Right cardiac atrium (tissue), 5 donors: ENCODE measurements at regions of chr1 and their contacts with region 1.

Region 1: GRCh38 chr1:167599957-167600581 is 30.0 kb upstream of the RCSD1 start:
- DNase-seq: peak in 2 of 3 donors; percentile 30 to 60
- ATAC-seq: peak; percentile 67 to 77
- H3K4me3 ChIP-seq: no peak overlapping the region
- H3K27ac ChIP-seq: no peak overlapping the region
- H3K4me1 ChIP-seq: peaks cover 8% of the 10 kb centered on the region
- H3K27me3 ChIP-seq: no peaks in the 10 kb centered on the region

Region 2: DNA sequence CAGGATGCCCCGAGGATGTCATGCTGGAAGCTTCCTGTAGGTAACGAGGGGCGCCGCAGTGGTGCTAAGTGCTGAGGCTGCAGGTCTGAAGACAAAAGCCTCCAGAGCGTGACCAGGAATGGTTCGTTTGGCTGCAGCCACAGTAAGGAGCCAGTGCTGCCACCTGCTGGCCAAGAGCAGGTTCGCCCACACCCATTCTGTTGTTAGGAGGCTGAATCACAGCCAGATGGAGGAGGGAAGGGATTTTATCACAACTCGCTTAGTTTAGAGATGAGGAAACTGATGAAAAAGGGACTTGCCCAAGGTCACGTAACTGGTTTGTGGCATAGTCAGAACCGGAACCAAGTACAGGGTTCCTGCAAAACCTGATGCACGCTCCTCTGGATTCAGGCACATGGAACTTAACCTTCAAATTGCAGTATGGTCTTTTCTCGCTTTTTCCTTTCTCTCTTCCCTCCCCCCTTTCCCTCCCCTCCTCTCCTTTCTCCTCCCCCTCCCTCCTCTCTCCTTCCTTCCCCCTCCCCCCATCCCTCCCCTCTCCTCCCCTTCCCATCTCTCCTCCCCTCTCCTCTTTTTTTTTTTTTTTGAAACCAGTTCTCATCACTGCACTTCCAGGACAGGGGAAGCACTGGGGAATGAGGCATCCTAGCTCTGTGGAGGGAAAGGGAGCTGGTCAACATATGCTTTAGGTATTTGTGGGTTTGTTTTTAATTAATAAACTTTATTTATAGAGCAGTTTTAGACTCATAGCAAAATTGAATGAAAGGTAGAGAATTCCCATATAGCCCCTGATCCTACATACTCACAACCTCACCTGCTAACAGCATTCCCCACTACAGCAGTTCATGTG is 203.5 kb after region 1 on chr1:
- intact Hi-C with region 1: loop called in 1 of 4 experiments (anchors 10 kb)
- DNase-seq: peak; percentile 94 to 96 (median 95)
- ATAC-seq: peak; percentile 94 to 96
- H3K4me3 ChIP-seq: no peak overlapping the region
- H3K27ac ChIP-seq: no peak overlapping the region
- H3K4me1 ChIP-seq: no peaks in the 10 kb centered on the region
- H3K27me3 ChIP-seq: no peaks in the 10 kb centered on the region

Region 3: DNA sequence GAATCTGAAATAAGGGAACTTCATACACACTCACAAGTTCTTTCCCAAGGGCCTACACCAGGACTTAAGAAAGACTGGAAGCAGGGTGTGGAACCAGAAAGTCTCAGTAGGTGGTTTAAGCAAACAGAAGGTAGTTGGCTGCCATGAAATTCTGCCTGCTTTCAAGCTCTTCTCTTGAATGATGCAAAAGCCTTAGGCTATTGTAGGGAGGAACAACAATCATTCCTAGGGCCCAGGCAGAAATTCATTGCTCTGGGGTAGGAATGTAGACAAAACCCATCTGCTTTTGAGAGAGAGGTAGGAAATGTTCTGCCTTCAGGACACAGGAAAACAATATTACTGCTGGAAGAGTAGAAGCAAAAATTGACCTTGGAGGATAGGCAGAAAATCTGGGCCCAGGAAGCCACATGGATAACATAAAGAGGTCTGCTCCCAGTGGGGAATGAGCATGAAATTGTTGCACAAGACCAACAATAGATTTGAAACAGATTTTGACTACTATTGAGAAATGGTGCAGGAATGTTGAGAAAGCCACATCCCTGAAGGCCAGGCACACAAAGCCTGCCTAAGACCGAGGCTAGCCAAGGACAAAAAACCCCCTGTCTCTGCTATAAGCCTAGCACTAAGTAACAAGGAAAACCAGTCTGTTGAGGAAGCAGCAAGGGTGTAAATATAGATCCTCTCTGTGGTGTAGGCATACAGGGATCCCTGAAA is 603.0 kb after region 1 on chr1:
- intact Hi-C with region 1: no loop called
- DNase-seq: no peak
- ATAC-seq: peak; percentile 75 to 79
- H3K4me3 ChIP-seq: no peak overlapping the region
- H3K27ac ChIP-seq: no peak overlapping the region
- H3K4me1 ChIP-seq: no peaks in the 10 kb centered on the region
- H3K27me3 ChIP-seq: no peaks in the 10 kb centered on the region